Posterior cingulate gyrus (tissue), 11 donors: ENCODE measurements at regions of chr16 and their contacts with region 1.

Region 1: GRCh38 chr16:51773521-51773920 is 622.5 kb upstream of the SALL1 start:
- DNase-seq: no peak

Region 2: DNA sequence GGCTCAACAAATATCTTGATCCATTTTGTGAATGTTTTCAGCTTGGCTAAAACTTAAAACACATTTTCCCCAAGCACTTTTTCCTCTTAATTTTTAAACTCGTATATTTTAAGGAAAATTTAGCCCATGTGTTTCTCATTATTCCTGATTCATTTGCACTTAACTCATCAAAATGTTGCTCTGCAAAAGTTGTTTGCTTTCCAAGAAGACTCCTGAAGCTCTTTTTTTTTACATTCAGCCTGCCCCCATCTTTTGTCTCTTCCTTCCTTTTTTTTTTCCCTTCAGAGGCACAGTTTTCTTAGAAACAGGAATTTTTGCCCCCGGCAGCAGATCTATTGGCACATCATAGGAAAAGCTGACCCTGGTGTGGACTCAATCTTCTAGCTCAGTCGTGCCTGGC is 467.4 kb before region 1 on chr16:
- intact Hi-C with region 1: loop called (anchors 10 kb)
- DNase-seq: no peak

Region 3: GRCh38 chr16:52237843-52238242 is 464.3 kb after region 1 on chr16:
- intact Hi-C with region 1: no loop called
- DNase-seq: peak in 1 of 10 donors; percentile 71